ENCODE measurements at regions of chr1 and their contacts with region 1.

Region 1: DNA sequence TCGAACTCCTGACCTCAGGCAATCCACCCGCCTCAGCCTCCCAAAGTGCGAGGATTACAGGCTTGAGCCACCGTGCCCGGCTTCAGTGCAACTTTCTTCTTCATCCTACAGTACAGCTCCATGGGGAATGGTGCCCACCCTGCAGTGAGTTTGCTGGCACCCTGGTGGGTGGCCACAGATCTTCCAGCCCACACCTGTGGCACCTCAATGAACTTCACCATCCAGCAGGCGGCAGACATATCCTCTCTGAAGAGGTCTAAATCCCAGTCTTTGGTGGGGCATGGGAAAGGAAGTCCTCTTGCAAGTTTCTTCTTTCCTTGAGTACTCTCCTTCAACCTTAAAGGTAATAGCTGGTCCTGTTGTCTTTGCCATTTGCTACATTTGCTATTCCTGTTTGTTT is 18.1 kb upstream of the ZBTB8A start:
- DNase-seq: no peak
- ATAC-seq: peak in 2 of 4 donors; percentile 13 to 40
- H3K4me3 ChIP-seq: peak overlapping the region; percentile 54
- H3K27ac ChIP-seq: no peak overlapping the region
- H3K4me1 ChIP-seq: no peaks in the 10 kb centered on the region
- H3K27me3 ChIP-seq: no peaks in the 10 kb centered on the region
- CTCF ChIP-seq: no peak

Region 2: GRCh38 chr1:32580348-32581017 is 59.3 kb after region 1 on chr1:
- intact Hi-C with region 1: no loop called
- DNase-seq: no peak
- ATAC-seq: no peak
- H3K4me3 ChIP-seq: no peak overlapping the region
- H3K27ac ChIP-seq: no peak overlapping the region
- H3K4me1 ChIP-seq: no peaks in the 10 kb centered on the region
- H3K27me3 ChIP-seq: no peaks in the 10 kb centered on the region
- CTCF ChIP-seq: no peak

Region 3: DNA sequence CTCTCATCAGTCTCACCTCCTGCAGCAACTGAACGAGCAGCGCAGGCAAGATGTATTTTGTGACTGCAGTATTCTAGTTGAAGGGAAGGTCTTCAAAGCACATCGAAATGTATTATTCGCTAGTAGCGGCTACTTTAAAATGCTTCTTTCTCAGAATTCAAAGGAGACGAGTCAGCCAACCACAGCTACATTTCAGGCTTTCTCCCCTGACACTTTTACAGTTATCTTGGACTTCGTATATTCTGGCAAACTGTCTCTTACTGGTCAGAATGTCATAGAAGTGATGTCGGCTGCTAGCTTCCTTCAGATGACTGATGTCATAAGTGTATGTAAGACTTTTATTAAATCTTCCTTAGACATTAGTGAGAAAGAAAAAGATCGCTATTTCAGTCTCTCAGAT is 71.8 kb after region 1 on chr1:
- intact Hi-C with region 1: no loop called
- DNase-seq: no peak
- ATAC-seq: no peak
- H3K4me3 ChIP-seq: no peak overlapping the region
- H3K27ac ChIP-seq: no peak overlapping the region
- H3K4me1 ChIP-seq: no peaks in the 10 kb centered on the region
- H3K27me3 ChIP-seq: no peaks in the 10 kb centered on the region
- CTCF ChIP-seq: no peak

Region 4: DNA sequence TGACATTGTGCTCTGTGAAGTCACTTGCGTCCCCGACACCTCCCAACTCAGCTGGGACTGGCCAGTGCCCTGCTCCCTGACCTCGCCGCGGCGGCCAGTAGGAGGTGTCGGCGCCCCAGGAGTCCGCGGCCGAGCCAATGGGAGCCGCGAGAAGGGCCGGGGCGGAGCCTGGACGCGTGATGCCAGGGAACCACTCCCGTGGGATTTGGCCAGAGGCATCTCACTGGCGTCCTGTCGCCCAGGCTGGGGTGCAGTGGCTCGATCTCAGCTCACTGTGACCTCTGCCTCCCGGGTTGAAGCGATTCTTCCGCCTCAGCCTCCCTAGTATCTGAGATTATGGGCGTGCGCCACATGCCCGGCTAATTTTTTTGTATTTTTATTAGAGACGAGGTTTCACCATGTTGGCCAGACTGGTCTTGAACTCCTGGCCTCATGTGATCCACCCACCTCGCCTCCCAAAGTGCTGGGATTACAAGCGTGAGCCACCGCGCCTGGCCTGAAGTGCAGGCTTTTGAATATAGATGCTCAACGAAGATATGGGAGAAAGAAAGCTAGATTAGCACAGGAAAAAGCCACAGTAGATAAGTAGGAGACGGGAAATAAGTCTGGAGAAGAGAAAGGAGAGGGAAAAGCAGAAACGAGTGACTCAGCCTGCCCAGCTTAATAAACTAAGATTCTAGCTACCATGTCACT is 91.2 kb after region 1 on chr1:
- intact Hi-C with region 1: loop called in 1 of 2 experiments (anchors 5 kb)
- DNase-seq: peak; percentile 91 to 95
- ATAC-seq: peak; percentile 100
- H3K4me3 ChIP-seq: peak overlapping the region; percentile 78
- H3K27ac ChIP-seq: peak overlapping the region; percentile 78
- H3K4me1 ChIP-seq: peaks cover 3% of the 10 kb centered on the region
- H3K27me3 ChIP-seq: no peaks in the 10 kb centered on the region
- CTCF ChIP-seq: peak; percentile 17